ENCODE measurements at regions of chr12 and their contacts with region 1.

Region 1: GRCh38 chr12:51210690-51211395 is 7.0 kb downstream of the POU6F1 start:
- DNase-seq: no peak
- H3K4me3 ChIP-seq: no peak overlapping the region
- H3K27ac ChIP-seq: no peak overlapping the region
- H3K4me1 ChIP-seq: peaks cover 0 to 4% (median 0%) of the 10 kb centered on the region in 4 donors
- H3K27me3 ChIP-seq: no peaks in the 10 kb centered on the region
- CTCF ChIP-seq: no peak

Region 2: GRCh38 chr12:51087818-51088217 is 123.0 kb before region 1 on chr12:
- intact Hi-C with region 1: loop called (anchors 5 kb)
- DNase-seq: no peak
- H3K4me3 ChIP-seq: no peak overlapping the region
- H3K27ac ChIP-seq: no peak overlapping the region
- H3K4me1 ChIP-seq: peaks cover 0 to 5% (median 0%) of the 10 kb centered on the region in 4 donors
- H3K27me3 ChIP-seq: no peaks in the 10 kb centered on the region
- CTCF ChIP-seq: no peak